Activated CD4-positive, alpha-beta T cell treated with anti-CD3 and anti-CD28 coated beads, Interleukin-2, amount 10 ng/mL, durations not matched to agents 7 days and 5 days (primary cell): ENCODE measurements at regions of chr3 and their contacts with region 1.

Region 1: DNA sequence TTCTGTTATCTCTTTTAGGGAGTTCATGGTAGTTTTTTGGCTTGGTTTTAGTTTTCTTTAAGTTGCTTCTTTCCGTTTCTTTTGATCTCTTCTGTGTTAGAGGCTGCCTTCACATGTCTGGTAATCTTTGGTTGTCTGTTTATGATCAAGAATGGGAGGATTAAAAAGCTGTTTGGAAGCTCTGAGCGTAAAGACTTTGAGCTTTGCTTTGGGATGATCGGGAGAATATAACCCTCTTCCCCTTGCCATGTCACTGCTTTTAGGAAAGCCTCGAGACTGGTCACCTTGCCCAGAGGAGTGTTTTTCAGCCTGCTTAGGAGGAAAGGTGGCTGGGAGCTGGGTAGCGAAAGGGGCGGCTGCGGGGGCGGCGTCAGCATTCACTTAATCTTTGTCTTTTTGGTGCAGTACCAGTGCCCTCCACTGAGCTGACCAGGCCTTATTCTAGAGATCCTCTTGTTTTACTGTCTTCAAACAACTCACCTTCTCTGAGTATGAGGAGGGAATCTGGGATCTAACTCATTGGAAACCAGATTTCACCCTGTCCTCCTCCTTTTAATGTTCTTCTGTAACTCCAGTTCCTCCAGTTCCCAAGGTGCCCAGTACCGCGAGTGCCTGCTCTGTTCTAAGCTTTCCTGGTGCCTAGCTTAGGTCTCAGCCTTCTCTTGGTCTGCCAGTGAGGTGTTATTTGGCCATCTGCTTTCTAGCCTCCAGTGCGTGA is 15.5 kb downstream of the TATDN2 start:
- DNase-seq: peak; percentile 71
- H3K4me3 Mint-ChIP-seq: peak overlapping the region; percentile 58
- H3K27ac Mint-ChIP-seq: peak overlapping the region; percentile 79
- H3K4me1 Mint-ChIP-seq: peaks cover 73% of the 10 kb centered on the region
- H3K27me3 Mint-ChIP-seq: no peaks in the 10 kb centered on the region

Region 2: GRCh38 chr3:10249081-10249861 is 14.5 kb before region 1 on chr3:
- CTCF ChIA-PET with region 1: interaction called, 20 read pairs
- POLR2A ChIA-PET with region 1: interaction called, 3 read pairs
- DNase-seq: peak; percentile 54
- H3K4me3 Mint-ChIP-seq: peak overlapping the region; percentile 96
- H3K27ac Mint-ChIP-seq: peak overlapping the region; percentile 91
- H3K4me1 Mint-ChIP-seq: peaks cover 52% of the 10 kb centered on the region
- H3K27me3 Mint-ChIP-seq: no peaks in the 10 kb centered on the region

Region 3: GRCh38 chr3:10280177-10280529 is 16.3 kb after region 1 on chr3:
- CTCF ChIA-PET with region 1: interaction called, 14 read pairs
- POLR2A ChIA-PET with region 1: no interaction called
- DNase-seq: no peak
- H3K4me3 Mint-ChIP-seq: no peak overlapping the region
- H3K27ac Mint-ChIP-seq: peak overlapping the region; percentile 15
- H3K4me1 Mint-ChIP-seq: peaks cover 38% of the 10 kb centered on the region
- H3K27me3 Mint-ChIP-seq: no peaks in the 10 kb centered on the region

Region 4: GRCh38 chr3:10286596-10287330 is 23.0 kb after region 1 on chr3:
- CTCF ChIA-PET with region 1: interaction called, 14 read pairs
- POLR2A ChIA-PET with region 1: no interaction called
- DNase-seq: peak; percentile 67
- H3K4me3 Mint-ChIP-seq: no peak overlapping the region
- H3K27ac Mint-ChIP-seq: no peak overlapping the region
- H3K4me1 Mint-ChIP-seq: peaks cover 28% of the 10 kb centered on the region
- H3K27me3 Mint-ChIP-seq: no peaks in the 10 kb centered on the region